Activated naive CD4-positive, alpha-beta T cell treated with anti-CD3 and anti-CD28 coated beads for 36 hours (primary cell): ENCODE measurements at regions of chr6 and their contacts with region 1.

Region 1: DNA sequence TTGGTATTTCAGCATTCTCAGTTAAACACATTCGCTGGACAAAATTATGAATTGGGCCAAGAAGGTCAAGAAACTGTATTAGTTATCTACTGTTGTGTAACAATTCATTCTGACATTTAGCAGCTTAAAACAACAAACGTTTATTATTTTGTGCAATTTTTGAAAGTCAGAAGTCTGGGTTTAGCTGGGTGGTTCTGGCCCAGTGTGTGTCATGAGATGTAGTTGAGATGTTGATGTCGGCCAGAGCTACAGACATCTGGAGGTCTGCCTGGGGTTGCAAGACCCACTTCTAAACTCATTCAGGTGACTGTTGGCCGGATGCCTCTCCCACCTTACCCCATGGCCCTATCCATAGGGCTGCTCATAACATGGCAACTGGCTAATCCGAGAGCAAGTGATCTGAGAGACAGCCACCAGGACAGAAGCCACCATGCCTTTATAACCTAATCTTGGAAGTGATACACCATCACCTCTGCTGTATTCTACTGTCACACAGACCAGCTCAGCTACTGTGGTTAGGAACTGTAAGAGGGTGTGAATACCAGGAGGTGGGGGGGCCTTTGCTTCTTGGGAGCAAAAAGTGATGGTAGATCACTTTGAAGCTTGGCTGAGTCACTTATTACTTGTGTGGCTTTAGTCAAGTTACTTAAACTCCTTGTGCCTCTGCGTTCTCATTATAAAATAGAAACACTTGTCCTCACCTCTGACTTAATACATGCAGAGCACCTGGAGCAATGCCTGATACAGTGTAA is 217.0 kb upstream of the MYLIP start:
- DNase-seq: peak; percentile 69
- H3K4me3 Mint-ChIP-seq: no peak overlapping the region
- H3K27ac Mint-ChIP-seq: no peak overlapping the region
- H3K4me1 Mint-ChIP-seq: peaks cover 31% of the 10 kb centered on the region
- H3K27me3 Mint-ChIP-seq: peaks cover 2% of the 10 kb centered on the region

Region 2: DNA sequence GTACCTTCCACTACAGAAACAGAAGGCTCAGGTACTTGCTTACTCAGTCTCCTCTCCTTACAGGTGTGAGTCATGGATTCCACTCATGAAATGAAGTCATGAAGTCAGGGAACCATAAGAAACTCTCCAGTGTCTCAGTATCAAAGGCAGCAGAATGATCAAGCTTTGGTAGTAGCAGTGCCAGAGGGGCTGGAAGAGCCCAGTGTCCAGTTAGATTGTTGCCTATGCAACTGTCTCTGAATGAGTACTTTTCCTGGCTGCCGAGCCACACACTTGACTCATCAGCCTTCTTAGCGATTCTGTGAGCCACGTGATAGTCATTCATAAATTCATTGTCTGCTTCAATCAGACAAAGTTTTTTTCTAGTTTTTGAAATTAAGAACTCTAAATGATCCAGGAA is 196.9 kb before region 1 on chr6:
- CTCF ChIA-PET with region 1: no interaction called
- intact Hi-C with region 1: loop called (anchors 1 kb)
- DNase-seq: peak; percentile 68
- H3K4me3 Mint-ChIP-seq: no peak overlapping the region
- H3K27ac Mint-ChIP-seq: peak overlapping the region; percentile 39
- H3K4me1 Mint-ChIP-seq: peaks cover 22% of the 10 kb centered on the region
- H3K27me3 Mint-ChIP-seq: peaks cover 2% of the 10 kb centered on the region

Region 3: DNA sequence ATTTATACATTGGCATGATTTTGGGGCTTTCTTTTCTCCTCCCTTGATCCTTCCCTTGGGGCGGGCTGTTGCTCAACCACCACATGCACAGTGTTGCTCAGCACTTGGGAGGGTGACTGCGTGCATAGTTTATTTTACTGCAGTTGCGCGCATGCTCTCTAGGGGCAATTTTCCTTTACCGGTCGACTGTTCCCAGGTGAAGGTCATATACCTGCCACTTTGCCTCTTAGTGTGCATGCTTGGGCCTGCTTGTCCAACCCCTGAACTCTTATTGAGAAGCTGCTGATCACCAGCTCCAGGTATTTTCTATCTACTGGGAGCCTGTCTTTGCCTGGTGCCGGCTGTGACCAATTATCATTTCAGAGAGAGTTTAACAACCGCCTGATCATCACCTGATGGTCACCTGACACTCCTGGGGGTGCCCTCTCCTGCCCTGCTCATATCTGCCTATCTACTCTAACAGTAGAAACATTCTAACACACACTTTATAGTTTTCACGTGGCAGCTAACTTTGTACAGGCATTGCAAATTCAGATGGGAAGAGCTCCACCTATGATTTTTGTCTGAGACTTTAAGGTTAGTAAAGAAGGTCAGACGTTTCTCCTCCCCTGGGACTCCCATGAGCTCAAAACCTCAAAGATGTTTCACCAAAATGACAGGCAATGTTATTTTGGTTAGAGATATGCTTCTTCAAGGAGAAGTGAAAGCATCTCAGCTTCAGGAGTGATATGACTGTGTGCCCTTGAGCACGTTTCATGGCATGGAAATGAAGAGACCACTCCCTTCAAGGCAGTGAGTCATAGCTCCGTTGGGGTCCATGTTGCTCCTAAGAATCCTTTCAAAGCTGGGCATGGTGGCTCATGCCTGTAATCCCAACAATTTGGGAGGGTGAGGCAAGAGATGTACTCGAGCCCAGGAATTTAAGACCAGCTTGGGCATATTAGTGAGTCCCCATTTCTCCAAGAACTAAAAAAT is 10.5 kb before region 1 on chr6:
- CTCF ChIA-PET with region 1: interaction called, 6 read pairs
- intact Hi-C with region 1: loop called (anchors 1 kb)
- DNase-seq: peak; percentile 34
- H3K4me3 Mint-ChIP-seq: no peak overlapping the region
- H3K27ac Mint-ChIP-seq: peak overlapping the region; percentile 28
- H3K4me1 Mint-ChIP-seq: peaks cover 14% of the 10 kb centered on the region
- H3K27me3 Mint-ChIP-seq: peaks cover 2% of the 10 kb centered on the region

Region 4: GRCh38 chr6:15987569-15987968 is 75.6 kb after region 1 on chr6:
- CTCF ChIA-PET with region 1: no interaction called
- intact Hi-C with region 1: loop called (anchors 5 kb)
- DNase-seq: no peak
- H3K4me3 Mint-ChIP-seq: no peak overlapping the region
- H3K27ac Mint-ChIP-seq: no peak overlapping the region
- H3K4me1 Mint-ChIP-seq: peaks cover 14% of the 10 kb centered on the region
- H3K27me3 Mint-ChIP-seq: no peaks in the 10 kb centered on the region

Region 5: GRCh38 chr6:16058216-16059075 is 146.5 kb after region 1 on chr6:
- CTCF ChIA-PET with region 1: no interaction called
- intact Hi-C with region 1: no loop called
- DNase-seq: no peak
- H3K4me3 Mint-ChIP-seq: no peak overlapping the region
- H3K27ac Mint-ChIP-seq: no peak overlapping the region
- H3K4me1 Mint-ChIP-seq: no peaks in the 10 kb centered on the region
- H3K27me3 Mint-ChIP-seq: no peaks in the 10 kb centered on the region

Region 6: DNA sequence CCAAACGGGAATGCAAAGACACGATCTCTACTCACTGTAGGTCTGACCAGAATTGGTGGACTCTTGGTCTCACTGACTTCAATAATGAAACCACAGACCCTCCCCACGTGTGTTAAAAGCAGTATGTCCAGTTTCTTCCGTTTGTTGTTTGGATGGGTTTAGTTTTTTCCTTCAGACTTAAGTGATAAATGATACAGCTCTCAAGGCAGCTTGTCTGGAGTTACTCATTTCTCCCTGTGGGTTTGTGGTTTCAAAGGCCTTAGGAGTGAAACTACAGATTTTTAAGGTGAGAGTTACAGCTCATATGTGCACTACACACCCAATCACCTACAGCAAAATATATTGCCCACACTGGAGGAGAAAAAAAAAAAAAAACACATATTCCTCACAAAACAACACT is 1103.2 kb after region 1 on chr6:
- CTCF ChIA-PET with region 1: no interaction called
- intact Hi-C with region 1: loop called (anchors 2 kb)
- DNase-seq: peak; percentile 56
- H3K4me3 Mint-ChIP-seq: peak overlapping the region; percentile 41
- H3K27ac Mint-ChIP-seq: no peak overlapping the region
- H3K4me1 Mint-ChIP-seq: peaks cover 18% of the 10 kb centered on the region
- H3K27me3 Mint-ChIP-seq: peaks cover 27% of the 10 kb centered on the region